Sciatic nerve (tissue), 2 donors: ENCODE measurements at regions of chr5 and their contacts with region 1.

Region 1: DNA sequence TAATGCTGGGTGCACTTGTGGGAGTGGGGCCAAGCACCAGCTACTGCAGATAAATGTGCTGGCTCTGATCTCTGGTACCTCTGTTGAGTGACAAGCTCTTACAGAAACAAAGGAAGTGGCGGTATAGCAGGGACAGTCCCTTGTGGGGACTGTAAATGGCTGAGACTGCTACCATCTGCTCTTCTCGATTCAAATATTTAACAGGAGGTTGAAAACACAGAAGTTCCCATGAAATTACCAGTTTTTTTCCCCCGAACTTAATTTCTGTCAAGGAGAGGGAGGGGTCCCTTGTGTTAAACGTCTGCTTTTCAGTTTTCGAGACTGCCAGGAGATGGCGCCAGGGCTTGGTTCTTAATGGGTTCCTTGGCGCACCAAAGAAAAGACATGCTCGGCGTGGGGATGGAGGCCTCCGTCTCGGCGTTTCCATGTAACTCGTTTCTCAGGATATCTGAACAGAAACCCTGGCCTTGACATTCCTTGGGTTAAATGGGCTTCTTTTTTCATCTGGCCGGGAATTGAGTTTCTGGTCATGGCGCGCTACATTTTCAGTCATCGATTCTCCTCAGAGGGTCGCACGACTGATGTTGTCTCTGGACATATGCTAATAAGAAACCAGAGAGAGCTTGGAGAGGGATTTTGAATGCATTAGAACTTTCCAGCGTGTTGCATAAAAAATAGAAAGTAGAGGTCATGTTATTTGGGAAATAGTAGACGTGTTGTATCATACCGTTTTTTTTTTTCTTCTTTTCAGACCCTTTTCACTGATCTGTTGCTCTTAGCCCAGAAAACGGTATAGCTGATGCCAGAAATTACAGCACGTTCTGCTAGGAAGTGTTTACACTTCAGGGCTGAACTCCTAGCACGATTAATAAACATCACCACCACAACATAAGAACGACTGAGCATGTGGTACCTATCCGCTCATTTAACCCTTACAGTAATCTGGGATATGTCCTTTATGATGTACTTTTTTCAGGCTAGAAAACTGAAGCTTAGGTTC is 64.0 kb downstream of the CARTPT start:
- DNase-seq: peak; percentile 92
- ATAC-seq: peak; percentile 95

Region 2: GRCh38 chr5:72134226-72134899 is 351.3 kb after region 1 on chr5:
- intact Hi-C with region 1: no loop called
- DNase-seq: no peak
- ATAC-seq: no peak

Region 3: DNA sequence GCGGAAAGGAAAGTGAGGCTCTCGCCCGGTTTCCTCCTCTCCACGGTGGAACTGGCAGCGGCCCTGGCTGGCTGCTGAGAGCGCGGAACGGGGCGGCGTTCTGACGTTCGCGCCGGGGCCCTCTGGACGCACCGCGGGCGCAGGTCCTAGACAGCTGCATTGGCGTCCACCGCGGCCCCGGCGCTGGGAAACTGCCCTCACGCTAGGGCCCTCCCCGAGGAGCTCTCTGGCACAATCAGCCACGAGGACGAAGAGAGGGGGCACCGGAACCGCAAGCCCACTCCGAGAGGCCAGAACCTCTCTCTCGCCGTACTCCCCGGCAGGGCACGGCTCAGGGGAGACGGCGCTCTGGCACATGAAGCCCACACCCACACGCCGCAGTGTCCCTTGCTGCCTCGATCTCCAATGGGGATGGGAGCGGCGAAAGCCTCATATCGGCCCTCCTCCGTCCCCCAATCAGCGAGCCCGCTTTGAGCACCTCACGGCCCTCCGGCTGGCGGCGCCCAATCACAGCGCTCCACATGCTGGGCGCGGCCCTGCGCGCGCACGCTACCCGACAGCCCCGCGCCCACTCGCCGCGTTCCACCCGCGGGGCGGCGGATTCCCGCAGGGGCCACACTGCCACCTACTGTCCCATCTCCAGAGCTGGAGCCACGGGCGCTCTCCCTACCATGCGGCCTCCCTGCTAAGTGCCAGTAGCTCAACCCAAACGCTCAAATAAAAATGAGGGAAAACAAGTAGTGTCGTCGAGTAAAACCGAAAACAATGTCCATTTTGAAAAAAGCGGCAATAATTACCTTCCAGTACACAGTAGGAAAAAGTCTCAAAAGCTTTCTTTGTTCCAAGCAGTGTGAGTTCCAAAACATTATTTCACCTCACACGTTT is 525.1 kb after region 1 on chr5:
- intact Hi-C with region 1: loop called (anchors 10 kb)
- DNase-seq: peak; percentile 98
- ATAC-seq: peak; percentile 100